Posterior vena cava (tissue), 2 donors: ENCODE measurements at regions of chr17 and their contacts with region 1.

Region 1: GRCh38 chr17:81241648-81242420 is 2.7 kb downstream of the NDUFAF8 start:
- DNase-seq: no peak

Region 2: GRCh38 chr17:80817321-80818251 is 424.2 kb before region 1 on chr17:
- intact Hi-C with region 1: no loop called
- DNase-seq: peak; percentile 62

Region 3: DNA sequence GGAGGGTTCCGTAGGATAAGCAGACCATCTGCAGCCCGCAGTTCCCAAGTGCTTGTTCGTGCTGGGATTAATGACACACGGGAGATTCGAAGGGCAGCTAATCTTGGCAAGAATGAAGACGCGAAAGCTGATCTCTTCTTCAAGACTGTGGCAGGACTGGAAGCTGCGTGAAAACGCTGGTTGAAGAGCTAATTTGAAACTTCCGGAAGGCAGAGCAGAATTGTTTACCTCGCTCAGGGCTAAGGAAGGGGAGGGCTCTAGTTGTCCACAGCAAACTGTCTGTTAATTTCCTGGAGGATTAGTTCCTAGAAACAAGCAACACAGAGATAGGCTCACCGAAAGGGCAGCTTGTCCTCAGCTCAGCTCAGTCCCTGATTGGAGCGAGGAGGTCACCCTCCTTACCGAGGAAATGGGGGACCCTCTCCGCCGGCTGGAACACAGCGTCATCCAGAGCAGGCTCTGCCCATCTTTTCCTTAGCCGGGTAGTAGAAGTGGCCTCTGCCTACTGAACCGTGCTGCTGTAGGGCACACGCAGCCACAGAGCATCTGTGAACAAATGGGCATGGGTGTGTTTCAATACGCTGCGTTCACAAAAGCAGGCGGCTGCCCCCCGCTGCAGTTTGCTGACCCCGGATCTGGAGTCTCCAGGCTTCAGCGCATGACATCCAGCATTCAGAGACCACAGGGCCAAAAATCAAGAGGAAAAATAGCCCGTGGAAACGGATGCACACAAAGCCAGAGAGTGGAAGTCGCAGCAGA is 223.6 kb before region 1 on chr17:
- intact Hi-C with region 1: no loop called
- DNase-seq: no peak

Region 4: DNA sequence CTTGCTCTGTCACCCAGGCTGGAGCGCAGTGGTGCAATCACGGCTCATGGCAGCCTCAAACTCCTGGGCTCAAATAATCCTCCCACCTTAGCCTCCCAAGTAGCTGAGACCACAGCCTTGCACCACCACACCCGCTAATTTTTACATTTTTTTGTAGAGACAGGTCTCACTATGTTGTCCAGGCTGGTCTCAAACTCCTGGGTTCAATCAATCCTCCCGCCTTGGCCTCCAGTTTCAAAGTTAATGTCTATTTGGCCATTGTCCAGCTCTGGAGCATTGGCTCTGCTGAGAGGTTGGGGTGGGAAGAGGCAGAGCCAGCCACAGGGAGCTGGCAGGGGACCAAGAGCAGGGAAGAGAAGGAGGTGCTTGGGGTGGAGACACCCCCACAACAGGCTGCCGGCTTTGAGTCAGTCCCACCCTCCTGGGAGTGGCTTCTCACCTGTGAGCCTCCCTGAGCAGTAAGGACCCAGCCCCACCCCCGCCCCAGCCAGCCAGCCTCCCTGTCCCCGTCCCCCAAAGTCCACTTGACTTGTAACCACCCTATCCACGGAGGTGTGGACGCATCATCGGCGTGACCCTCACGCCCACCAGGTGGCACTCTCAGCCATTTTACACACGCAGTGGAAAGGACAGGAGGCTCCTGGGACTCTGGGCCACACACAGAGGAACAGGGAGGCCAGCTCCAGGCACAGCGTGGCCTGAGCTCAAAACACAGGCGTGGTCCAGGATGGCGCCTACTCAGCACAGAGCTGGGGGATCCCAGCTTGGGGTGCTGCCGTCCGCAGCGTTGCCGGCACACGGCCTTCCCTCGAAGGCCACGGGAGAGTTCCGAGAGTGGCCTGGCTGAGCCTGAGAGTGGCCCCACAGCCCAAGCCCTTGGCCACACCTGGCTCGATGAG is 99.3 kb before region 1 on chr17:
- intact Hi-C with region 1: loop called (anchors 5 to 10 kb)
- DNase-seq: peak; percentile 93